Prostate gland (tissue), 2 donors: ENCODE measurements at regions of chr17 and their contacts with region 1.

Region 1: DNA sequence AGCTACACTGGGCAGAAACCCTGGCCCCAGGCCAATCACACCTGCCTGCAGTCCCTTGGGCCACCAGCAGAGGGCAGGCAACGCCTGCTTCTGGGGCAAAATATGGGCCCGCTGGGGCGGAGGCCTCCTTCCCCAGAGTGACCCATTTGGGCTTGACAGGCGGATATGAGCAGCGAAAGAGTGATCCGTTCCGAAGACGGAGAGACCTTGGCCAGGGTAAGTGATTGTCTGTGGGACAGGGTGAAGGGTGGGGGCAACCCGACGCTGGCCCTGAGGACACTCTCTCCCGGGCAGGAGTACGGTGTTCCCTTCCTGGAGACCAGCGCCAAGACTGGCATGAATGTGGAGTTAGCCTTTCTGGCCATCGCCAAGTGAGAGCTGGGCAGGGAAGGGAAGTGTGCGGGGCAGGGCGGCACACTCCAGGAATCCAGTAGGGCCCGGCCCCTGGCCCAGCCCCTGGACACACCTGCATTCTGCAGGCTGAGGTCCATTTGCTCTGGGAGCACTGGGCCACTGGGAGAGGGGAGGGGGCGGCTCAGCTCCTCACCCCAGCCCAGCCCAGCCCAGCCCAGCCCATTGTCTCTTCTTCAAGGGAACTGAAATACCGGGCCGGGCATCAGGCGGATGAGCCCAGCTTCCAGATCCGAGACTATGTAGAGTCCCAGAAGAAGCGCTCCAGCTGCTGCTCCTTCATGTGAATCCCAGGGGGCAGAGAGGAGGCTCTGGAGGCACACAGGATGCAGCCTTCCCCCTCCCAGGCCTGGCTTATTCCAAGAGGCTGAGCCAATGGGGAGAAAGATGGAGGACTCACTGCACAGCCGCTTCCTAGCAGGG is 3.5 kb upstream of the NHERF1 start:
- DNase-seq: peak; percentile 86
- H3K4me3 ChIP-seq: peak overlapping the region in 1 of 2 donors; percentile 19
- H3K27ac ChIP-seq: peak overlapping the region; percentile 82 to 84
- H3K4me1 ChIP-seq: no peaks in the 10 kb centered on the region
- H3K27me3 ChIP-seq: no peaks in the 10 kb centered on the region
- CTCF ChIP-seq: peak; percentile 100
- POLR2A ChIP-seq: no peak

Region 2: GRCh38 chr17:74770498-74771318 is 25.8 kb after region 1 on chr17:
- intact Hi-C with region 1: loop called (anchors 2 kb)
- DNase-seq: peak; percentile 83
- H3K4me3 ChIP-seq: no peak overlapping the region
- H3K27ac ChIP-seq: peak overlapping the region; percentile 46 to 55
- H3K4me1 ChIP-seq: peaks cover 8% of the 10 kb centered on the region
- H3K27me3 ChIP-seq: no peaks in the 10 kb centered on the region
- CTCF ChIP-seq: peak; percentile 70 to 97 (median 92)
- POLR2A ChIP-seq: no peak

Region 3: DNA sequence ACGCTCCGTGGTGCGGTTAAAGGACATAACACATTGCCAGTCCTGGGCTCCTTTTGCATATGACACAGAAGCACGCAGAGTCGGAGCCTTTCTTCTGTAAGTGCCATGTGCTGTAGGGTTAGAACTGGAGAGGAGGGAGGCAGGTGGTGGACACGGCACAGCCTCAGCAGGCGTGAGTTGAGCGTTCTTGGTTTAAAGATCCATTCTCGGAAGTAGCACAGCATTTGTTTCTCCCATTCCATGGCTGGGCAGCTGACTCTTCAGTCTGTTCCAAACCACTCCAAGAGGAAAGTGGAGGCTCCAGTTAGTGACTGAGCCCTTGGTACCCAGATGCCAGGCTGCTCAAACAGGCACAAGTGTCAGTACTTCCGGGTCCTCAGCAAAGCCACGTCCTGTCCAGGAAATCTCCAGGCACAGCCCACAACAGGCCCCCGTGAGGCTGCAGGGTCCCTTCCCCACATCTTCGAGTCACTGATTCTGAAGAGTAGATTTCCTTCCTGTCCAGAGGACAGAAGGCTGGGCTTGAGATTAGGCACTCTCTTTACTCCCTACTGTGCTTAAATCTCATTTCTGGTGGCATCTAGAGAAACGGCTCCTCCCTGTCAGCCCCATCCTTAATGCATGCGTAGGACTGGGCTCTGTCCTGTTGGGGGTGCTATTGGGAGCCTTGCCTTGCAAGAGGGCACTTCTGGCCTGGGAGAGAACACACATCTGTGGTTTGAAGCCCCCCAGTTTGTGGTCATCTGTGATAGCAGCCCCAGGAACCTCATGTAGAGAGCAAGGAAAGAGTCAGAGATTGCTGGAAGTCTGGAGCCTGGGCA is 70.8 kb after region 1 on chr17:
- intact Hi-C with region 1: no loop called
- DNase-seq: no peak
- H3K4me3 ChIP-seq: no peak overlapping the region
- H3K27ac ChIP-seq: no peak overlapping the region
- H3K4me1 ChIP-seq: no peaks in the 10 kb centered on the region
- H3K27me3 ChIP-seq: no peaks in the 10 kb centered on the region
- CTCF ChIP-seq: no peak
- POLR2A ChIP-seq: no peak

Region 4: GRCh38 chr17:74842599-74843351 is 97.8 kb after region 1 on chr17:
- intact Hi-C with region 1: no loop called
- DNase-seq: peak; percentile 35
- H3K4me3 ChIP-seq: peak overlapping the region; percentile 19 to 30
- H3K27ac ChIP-seq: no peak overlapping the region
- H3K4me1 ChIP-seq: no peaks in the 10 kb centered on the region
- H3K27me3 ChIP-seq: no peaks in the 10 kb centered on the region
- CTCF ChIP-seq: peak; percentile 25 to 72 (median 49)
- POLR2A ChIP-seq: no peak

Region 5: DNA sequence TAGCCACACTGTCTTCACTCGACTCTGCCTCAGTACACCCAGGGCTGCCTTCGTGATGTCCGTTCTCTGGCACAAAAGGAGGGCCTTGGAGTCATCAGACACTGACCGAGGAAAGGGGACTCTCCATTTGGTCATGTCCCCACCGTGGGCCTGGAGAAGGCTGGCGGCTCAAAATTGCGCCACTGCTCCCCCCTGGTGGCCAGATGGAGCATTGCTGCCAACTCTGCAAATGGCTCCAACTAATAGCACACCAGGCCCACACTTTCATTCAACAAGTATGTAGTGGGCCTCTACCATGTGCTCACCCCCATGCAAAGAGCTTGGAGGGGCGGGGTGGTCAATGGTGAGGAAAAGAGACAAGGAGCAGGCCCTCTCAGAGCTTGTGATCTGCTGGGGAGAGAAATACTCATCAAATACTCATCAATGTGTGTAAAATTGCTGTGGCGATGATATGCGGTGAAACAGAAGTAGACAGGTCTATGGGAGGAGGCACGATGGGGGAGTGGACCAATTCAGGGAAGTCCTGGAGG is 120.0 kb after region 1 on chr17:
- intact Hi-C with region 1: loop called (anchors 2 kb)
- DNase-seq: peak; percentile 64
- H3K4me3 ChIP-seq: no peak overlapping the region
- H3K27ac ChIP-seq: no peak overlapping the region
- H3K4me1 ChIP-seq: peaks cover 8% of the 10 kb centered on the region
- H3K27me3 ChIP-seq: peaks cover 14% of the 10 kb centered on the region
- CTCF ChIP-seq: peak; percentile 90 to 96 (median 91)
- POLR2A ChIP-seq: no peak